Motor neuron (in vitro differentiated cells): ENCODE measurements at regions of chr4 and their contacts with region 1.

Region 1: GRCh38 chr4:168710353-168710946 is 213.6 kb downstream of the PALLD start:
- ATAC-seq: peak in 4 of 8 experiments; percentile 33 to 87 (median 84)
- H3K4me3 ChIP-seq: no peak overlapping the region
- H3K27ac ChIP-seq: no peak overlapping the region
- H3K4me1 ChIP-seq: peaks cover 4 to 21% of the 10 kb centered on the region in 2 donors

Region 2: GRCh38 chr4:168304744-168305459 is 405.5 kb before region 1 on chr4:
- in situ Hi-C with region 1: no loop called
- ATAC-seq: peak in 2 of 8 experiments; percentile 38 to 88
- H3K4me3 ChIP-seq: no peak overlapping the region
- H3K27ac ChIP-seq: no peak overlapping the region
- H3K4me1 ChIP-seq: no peaks in the 10 kb centered on the region

Region 3: DNA sequence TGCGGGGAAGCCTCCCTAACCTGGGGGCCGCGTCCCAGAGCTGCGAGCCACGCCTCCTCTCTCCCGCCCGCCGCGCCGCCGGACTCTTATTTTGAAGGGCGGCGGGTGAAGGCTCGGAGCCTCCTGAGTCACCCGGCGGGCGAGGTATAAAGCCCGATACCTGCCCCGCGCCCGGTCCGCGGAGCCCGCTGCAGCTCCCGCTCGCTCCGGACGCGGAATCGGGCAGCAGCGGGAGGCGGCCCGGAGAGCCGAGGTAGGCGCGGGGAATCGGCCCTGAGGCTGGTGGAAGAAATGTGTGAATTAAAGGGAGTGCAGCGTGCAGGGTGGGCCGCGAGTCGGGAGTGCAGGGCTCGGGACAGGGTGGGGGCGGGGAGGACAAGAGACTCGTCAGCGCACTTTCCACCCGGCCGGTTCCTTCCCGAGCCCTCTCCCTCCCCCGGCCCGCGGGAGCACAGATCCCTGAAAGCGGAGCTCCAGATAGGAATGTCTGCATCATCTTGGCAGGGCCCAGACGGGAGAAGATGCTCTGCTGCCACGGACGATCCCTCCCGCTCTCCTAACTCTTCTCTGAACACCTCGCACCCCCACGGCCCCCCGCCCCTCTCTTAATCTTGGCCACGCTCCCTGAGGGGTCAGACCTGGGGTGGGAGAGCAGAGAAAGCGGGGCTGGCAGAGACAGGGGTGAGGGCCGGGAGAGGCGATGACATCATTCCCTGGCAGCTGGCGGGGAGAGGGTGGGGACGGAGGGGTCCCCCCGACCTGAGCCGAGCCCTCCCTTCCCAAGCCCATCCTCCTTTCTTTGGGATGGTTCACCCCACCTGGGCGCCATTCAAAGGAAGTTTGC is 121.7 kb after region 1 on chr4:
- in situ Hi-C with region 1: loop called in 1 of 9 experiments (anchors 25 kb)
- ATAC-seq: peak; percentile 75 to 87 (median 78)
- H3K4me3 ChIP-seq: peak overlapping the region; percentile 76 to 95 (median 88)
- H3K27ac ChIP-seq: peak overlapping the region; percentile 74 to 95
- H3K4me1 ChIP-seq: peaks cover 0 to 13% of the 10 kb centered on the region in 2 donors